HEK293 (cell line): ENCODE measurements at regions of chr15 and their contacts with region 1.

Region 1: DNA sequence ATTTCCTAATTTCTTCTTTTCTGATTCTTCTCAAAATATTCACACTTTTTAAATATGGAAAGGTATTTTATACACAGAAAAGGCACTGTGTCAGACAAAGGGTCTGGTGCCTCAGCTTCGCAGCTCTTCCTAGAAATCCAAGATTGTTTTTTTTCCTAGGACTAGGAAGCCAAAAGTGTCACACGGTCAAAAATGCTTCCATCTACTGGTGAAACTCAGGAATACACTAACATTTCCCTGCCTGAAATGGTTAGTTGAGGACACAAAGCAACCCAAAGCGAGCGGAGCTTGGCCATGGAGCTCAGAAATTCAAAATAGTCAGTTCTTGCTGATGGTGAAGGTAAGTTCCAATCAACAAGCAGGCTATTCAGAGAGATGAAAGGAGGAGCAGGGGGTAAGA is 426.5 kb upstream of the RASGRP1 start:
- H3K4me3 ChIP-seq: no peak overlapping the region
- H3K27ac ChIP-seq: no peak overlapping the region
- H3K4me1 ChIP-seq: no peaks in the 10 kb centered on the region
- CTCF ChIP-seq: no peak

Region 2: DNA sequence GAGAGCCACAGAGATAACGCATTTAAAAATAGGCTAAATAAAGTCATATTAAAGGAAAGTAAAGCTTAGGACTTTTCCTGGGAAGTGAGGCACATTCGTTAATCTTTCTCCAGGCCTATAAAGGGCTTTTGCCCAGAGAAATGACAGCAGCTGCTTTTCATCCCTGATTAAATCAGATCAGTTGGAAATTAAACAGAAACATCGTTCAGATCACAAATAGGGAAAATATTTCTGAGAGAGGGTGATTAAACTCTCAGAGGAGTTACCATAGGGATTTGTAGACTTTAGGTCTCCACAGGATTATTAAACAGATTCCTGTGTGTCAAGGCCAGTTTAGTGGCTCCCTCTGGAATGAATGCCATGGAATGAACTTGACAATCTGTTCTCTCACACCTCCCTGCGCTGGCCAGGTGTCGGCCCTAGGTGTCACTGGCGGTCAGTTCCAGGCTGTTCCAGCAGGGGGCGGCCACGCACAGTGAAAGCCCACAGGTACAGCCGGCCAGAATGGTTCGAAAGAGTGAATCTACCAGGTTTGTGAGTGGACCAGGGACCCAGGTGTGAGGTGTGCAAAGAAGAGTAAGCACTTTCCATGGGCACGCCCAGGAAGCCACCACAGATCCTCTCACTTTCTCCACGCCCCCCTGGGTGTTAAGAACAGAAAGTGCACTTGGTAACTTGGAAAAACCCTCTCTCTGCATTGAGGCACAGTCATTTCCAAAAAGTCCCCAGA is 173.5 kb before region 1 on chr15:
- CTCF ChIA-PET with region 1: interaction called, 20 read pairs
- POLR2A ChIA-PET with region 1: no interaction called
- H3K4me3 ChIP-seq: no peak overlapping the region
- H3K27ac ChIP-seq: no peak overlapping the region
- H3K4me1 ChIP-seq: no peaks in the 10 kb centered on the region
- CTCF ChIP-seq: peak; percentile 89

Region 3: DNA sequence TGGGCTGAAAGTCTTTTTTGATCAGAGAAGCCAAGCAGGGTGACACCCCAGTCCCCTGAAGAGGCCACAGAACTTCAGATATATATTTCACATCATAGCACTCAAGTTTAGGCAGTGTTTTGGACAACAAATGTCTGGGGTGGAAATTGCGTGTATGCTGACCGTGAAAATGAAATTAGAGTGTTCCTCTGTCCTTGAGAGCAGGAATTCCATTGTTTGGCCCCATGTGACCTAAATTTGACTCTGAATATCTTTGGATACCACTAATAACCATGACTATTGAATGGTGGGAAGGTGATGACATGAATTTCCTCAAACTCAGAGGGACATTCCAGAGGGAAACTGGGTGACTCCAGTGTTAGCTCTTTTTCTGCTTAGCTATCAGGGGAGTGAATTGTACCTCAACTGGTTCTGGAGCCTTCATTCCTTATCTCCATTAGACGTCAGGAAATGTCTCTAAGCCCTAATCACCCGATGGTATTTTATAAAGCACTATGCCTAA is 163.0 kb before region 1 on chr15:
- CTCF ChIA-PET with region 1: no interaction called
- POLR2A ChIA-PET with region 1: no interaction called
- H3K4me3 ChIP-seq: no peak overlapping the region
- H3K27ac ChIP-seq: no peak overlapping the region
- H3K4me1 ChIP-seq: no peaks in the 10 kb centered on the region
- CTCF ChIP-seq: no peak